Activated B cell treated with CpG ODN at 0.5 μM for 24 hours (primary cell): ENCODE measurements at regions of chr3 and their contacts with region 1.

Region 1: DNA sequence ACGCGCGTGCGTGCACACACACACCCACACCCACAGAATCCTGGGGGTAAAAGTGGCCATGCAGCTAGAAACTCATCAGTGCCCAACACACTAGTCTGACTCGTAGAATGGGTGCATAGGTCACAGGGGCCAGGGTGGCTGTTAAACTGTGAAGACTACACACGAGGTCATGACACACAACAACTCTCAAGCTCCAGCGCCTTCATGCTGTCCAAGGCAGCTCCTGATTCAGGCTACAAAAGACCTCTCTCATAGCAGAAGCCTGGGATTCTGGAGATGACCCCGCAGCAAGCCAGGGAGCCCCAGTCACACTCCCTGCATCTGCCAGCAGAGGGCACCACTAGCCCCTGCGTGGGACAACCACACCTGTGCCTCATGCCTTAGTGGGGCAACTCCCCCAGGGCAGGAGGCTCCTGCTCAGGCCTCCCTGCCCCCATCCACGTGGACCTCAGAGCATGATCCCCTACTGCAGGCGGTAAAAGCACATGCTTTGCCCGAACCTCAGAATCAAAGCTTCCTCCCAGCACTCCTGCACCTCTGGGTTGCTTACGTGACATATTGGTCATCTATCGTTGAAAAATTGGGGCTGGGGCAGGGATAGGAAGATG is 93.1 kb downstream of the LRIG1 start:
- DNase-seq: peak; percentile 66
- ATAC-seq: peak; percentile 93
- H3K4me3 Mint-ChIP-seq: no peak overlapping the region
- H3K27ac Mint-ChIP-seq: no peak overlapping the region
- H3K4me1 Mint-ChIP-seq: peaks cover 5% of the 10 kb centered on the region
- H3K27me3 Mint-ChIP-seq: no peaks in the 10 kb centered on the region
- CTCF ChIP-seq: peak; percentile 24

Region 2: GRCh38 chr3:66253790-66254620 is 153.7 kb before region 1 on chr3:
- CTCF ChIA-PET with region 1: interaction called, 9 read pairs
- POLR2A ChIA-PET with region 1: no interaction called
- intact Hi-C with region 1: loop called (anchors 1 kb)
- DNase-seq: no peak
- ATAC-seq: no peak
- H3K4me3 Mint-ChIP-seq: no peak overlapping the region
- H3K27ac Mint-ChIP-seq: no peak overlapping the region
- H3K4me1 Mint-ChIP-seq: peaks cover 18% of the 10 kb centered on the region
- H3K27me3 Mint-ChIP-seq: no peaks in the 10 kb centered on the region
- CTCF ChIP-seq: peak; percentile 96

Region 3: DNA sequence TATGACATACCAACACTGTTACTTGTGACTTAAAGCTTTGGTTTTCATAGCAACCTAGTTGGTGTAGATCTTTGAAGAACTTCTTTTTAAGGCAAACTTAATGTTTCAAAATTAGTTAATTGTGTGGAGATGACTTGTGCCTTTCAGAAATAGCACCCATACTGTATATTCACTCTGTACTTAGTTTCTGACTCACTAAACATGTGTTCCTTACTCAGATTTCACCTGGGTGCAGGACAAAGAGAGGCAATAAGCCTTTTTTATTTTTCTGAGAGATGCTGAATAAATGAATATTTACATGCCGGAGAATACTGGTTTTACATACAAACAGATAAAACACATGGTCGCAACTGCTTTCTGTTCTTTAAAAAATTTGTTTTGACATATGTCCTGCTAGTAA is 142.1 kb before region 1 on chr3:
- CTCF ChIA-PET with region 1: no interaction called
- POLR2A ChIA-PET with region 1: no interaction called
- intact Hi-C with region 1: no loop called
- DNase-seq: no peak
- ATAC-seq: no peak
- H3K4me3 Mint-ChIP-seq: no peak overlapping the region
- H3K27ac Mint-ChIP-seq: no peak overlapping the region
- H3K4me1 Mint-ChIP-seq: peaks cover 25% of the 10 kb centered on the region
- H3K27me3 Mint-ChIP-seq: no peaks in the 10 kb centered on the region
- CTCF ChIP-seq: no peak

Region 4: GRCh38 chr3:66276705-66277274 is 130.9 kb before region 1 on chr3:
- CTCF ChIA-PET with region 1: interaction called, 20 read pairs
- POLR2A ChIA-PET with region 1: interaction called, 4 read pairs
- intact Hi-C with region 1: loop called (anchors 1 kb)
- DNase-seq: no peak
- ATAC-seq: peak; percentile 34
- H3K4me3 Mint-ChIP-seq: no peak overlapping the region
- H3K27ac Mint-ChIP-seq: no peak overlapping the region
- H3K4me1 Mint-ChIP-seq: no peaks in the 10 kb centered on the region
- H3K27me3 Mint-ChIP-seq: no peaks in the 10 kb centered on the region
- CTCF ChIP-seq: peak; percentile 76

Region 5: GRCh38 chr3:66665021-66665695 is 257.4 kb after region 1 on chr3:
- CTCF ChIA-PET with region 1: no interaction called
- POLR2A ChIA-PET with region 1: no interaction called
- intact Hi-C with region 1: no loop called
- DNase-seq: no peak
- ATAC-seq: no peak
- H3K4me3 Mint-ChIP-seq: no peak overlapping the region
- H3K27ac Mint-ChIP-seq: no peak overlapping the region
- H3K4me1 Mint-ChIP-seq: no peaks in the 10 kb centered on the region
- H3K27me3 Mint-ChIP-seq: peaks cover 6% of the 10 kb centered on the region
- CTCF ChIP-seq: no peak

Region 6: DNA sequence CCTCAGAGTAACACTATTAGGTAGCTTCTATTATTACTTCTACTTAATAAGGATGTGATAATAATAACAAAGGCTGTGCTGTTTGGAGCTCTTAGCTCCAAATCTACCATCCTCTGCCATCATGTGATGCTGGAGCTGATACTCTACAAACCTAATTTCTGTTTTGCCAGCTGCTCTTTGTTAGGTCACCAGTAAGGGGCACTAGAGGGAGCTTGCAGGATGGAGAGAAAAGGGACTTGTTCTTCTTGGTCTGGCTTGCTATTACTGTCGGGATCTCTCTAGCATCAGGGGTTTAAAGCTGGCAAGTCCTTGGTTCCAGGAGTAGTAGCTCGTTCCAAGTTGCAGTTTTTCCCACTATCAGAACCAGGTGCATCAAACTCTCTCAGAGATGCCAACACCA is 395.5 kb after region 1 on chr3:
- CTCF ChIA-PET with region 1: interaction called, 11 read pairs
- POLR2A ChIA-PET with region 1: no interaction called
- intact Hi-C with region 1: no loop called
- DNase-seq: no peak
- ATAC-seq: no peak
- H3K4me3 Mint-ChIP-seq: no peak overlapping the region
- H3K27ac Mint-ChIP-seq: no peak overlapping the region
- H3K4me1 Mint-ChIP-seq: no peaks in the 10 kb centered on the region
- H3K27me3 Mint-ChIP-seq: peaks cover 21% of the 10 kb centered on the region
- CTCF ChIP-seq: no peak

Region 7: DNA sequence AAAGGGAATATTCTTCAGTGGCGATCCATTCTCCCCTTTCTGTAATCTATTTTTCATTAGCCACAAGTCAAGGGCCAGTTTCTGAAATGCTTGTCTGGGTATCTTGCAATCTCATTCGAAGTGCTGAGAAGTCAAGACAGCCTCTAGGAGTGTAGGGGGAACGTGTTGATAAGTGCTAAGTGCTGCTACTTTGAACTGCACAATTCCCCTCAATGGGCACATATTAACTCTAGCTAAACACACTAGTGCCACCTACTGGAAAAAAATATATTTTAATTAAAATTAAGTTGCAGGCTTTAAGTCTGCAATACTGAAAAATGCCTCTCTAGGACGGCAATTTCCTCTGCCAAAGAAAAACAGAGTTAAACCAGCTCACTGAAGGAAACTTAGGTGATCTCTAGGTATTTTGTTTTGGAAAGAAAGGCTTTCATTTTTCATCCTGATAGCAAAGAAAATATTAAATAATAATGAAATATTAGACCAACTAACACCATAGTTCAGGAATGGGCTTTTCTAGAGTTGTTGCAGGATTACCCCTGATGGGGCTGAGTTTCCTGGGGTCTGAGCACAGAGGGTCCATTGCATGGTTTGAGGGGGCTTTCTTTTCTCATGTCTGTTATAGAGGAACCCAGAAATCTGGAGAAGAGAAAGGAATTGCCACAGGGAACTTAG is 408.5 kb after region 1 on chr3:
- CTCF ChIA-PET with region 1: interaction called, 68 read pairs
- POLR2A ChIA-PET with region 1: no interaction called
- intact Hi-C with region 1: loop called (anchors 1 kb)
- DNase-seq: no peak
- ATAC-seq: peak; percentile 56
- H3K4me3 Mint-ChIP-seq: no peak overlapping the region
- H3K27ac Mint-ChIP-seq: no peak overlapping the region
- H3K4me1 Mint-ChIP-seq: no peaks in the 10 kb centered on the region
- H3K27me3 Mint-ChIP-seq: peaks cover 5% of the 10 kb centered on the region
- CTCF ChIP-seq: peak; percentile 78

Region 8: DNA sequence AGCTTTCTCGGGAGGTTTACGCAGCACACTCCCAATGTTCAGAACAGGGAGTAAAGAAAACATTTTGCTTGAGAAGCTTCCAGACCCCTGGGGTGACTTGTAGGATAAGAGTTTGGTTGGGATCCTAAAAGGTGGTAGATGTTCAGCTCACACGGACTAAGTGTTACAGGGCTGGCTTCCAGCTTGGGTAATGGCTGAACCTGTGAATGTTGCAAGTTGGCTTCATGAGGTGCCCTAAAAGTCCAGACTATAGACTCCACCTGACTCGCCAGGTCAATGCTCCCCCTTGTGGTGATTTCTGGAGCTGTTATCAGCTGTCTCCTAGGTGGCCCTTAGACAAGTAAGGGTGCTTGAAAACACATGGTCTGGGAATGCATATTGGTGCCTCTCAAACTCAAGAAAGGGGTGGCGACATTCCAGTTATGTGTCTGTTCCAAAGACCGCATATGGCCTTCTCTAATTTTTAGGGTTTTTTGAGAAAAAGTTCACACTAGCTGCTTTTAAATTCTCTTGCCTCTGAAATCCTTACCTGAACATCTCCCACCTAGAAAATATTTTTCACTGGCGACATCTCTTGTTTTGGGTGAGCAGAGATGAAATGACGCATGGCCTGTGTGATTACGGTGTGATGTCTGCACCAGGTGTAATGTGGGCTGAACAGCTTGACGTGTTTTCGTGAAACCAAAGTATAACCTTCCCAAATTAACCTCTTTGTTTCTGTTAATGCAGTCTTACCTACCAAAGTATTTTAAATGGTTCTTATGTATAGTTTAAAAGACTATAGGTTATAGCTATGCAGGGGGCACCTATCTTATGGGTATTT is 414.7 kb after region 1 on chr3:
- CTCF ChIA-PET with region 1: interaction called, 68 read pairs
- POLR2A ChIA-PET with region 1: no interaction called
- intact Hi-C with region 1: no loop called
- DNase-seq: peak; percentile 32
- ATAC-seq: peak; percentile 77
- H3K4me3 Mint-ChIP-seq: no peak overlapping the region
- H3K27ac Mint-ChIP-seq: no peak overlapping the region
- H3K4me1 Mint-ChIP-seq: no peaks in the 10 kb centered on the region
- H3K27me3 Mint-ChIP-seq: peaks cover 3% of the 10 kb centered on the region
- CTCF ChIP-seq: no peak